Activated CD8-positive, alpha-beta T cell treated with anti-CD3 and anti-CD28 coated beads, Interleukin-2, amount 10 ng/mL, durations not matched to agents 7 days and 5 days (primary cell): ENCODE measurements at regions of chr2 and their contacts with region 1.

Region 1: DNA sequence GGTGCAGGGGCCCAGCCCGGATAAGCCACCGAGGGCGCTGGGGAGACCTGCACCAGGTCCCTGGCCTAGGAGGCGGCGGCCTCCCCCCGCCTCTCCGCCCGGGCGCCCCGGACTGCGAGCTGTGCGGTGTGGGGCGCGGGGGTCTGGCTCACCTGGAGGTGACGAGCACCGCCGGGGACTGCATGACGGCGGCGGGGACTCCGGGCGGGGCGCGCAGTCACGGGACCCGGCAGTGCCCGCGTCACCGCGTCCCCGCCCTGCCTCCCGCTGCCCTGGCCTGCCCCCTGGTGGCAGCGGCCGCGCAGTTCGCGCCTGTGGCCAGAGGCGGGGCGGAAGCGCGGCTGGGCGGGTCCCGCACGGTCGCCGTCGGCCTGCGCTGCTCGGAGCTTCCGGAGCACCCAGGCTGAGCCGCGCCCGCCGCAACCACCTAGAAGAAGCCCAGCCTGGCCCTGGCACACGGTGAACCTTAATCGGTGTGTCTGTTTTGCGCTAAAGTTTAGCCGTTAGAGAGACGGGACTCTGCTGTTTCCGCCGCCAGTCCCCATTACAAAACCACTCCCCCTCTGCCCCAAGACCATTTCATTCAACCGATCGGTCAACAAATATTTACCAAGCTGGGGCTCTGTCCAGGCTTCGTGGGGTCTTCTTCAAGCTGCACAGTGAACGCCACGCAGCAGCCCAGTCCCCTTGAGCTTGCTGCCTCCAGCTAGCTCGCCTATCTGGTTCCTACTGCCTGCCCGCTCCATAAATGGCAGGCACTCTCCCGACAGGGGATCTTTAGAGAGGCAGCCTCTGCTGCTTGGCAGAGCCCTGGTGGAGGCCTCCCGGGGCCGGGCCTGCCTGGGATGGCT is at the start of gene HS1BP3:
- DNase-seq: peak; percentile 89
- ATAC-seq: peak; percentile 95
- H3K4me3 Mint-ChIP-seq: peak within 1 kb of the TSS; percentile 87
- H3K27ac Mint-ChIP-seq: peak within 1 kb of the TSS; percentile 91
- H3K4me1 Mint-ChIP-seq: peaks cover 19% of the 10 kb centered on the region
- H3K27me3 Mint-ChIP-seq: peaks cover 7% of the 10 kb centered on the region
- total RNA-seq, gene HS1BP3: 10.5 to 11.2 TPM

Region 2: GRCh38 chr2:20350753-20351554 is 300.2 kb before region 1 on chr2 and contains the start of gene PUM2:
- CTCF ChIA-PET with region 1: interaction called, 3 read pairs
- POLR2A ChIA-PET with region 1: interaction called, 10 read pairs
- DNase-seq: peak; percentile 95
- ATAC-seq: peak; percentile 86
- H3K4me3 Mint-ChIP-seq: peak within 1 kb of the TSS; percentile 78
- H3K27ac Mint-ChIP-seq: no peak within 1 kb of the TSS
- H3K4me1 Mint-ChIP-seq: peaks cover 29% of the 10 kb centered on the region
- H3K27me3 Mint-ChIP-seq: no peaks in the 10 kb centered on the region
- total RNA-seq, gene PUM2: 123 to 129 TPM

Region 3: DNA sequence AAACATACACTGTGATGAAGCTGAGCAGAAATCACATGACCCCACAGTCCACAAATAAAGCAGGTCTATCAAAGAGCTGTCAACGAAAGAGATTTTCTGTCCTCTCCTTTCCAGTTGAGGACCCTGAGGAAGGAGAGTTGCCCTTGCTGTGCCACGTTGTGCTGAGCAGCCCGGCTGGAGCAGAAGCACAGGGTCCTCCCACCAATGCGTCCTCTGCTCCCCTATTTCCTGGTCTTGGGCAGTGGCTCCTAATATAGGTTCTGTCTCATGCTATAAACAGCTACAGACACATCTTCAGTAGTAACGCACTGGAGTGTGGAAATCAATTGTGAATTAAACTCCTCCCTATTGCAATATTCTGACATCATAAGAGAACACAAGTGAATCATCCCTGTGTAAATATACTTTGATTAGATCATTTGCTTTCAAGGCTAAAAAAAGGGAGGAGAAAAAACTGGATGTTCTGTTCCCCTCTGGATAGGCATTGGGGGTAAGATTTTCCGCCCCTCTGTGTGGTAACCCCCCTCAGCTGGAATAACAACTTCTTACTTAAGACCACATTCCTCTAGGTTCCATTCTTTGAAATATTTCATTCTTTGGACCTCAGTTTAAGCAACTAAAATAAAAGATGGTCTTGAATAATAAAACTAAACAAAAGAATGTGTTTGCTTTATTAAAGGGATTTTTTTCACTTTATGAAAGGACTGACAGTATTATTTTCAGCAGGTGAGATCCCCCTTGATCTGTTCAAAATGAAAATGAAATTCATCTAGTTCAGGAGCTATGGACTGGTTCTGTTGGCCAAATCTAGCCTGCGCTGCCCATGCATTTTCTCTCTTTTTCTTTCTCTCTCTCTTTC is 212.5 kb before region 1 on chr2:
- CTCF ChIA-PET with region 1: interaction called, 37 read pairs
- POLR2A ChIA-PET with region 1: no interaction called
- DNase-seq: no peak
- ATAC-seq: no peak
- H3K4me3 Mint-ChIP-seq: no peak overlapping the region
- H3K27ac Mint-ChIP-seq: no peak overlapping the region
- H3K4me1 Mint-ChIP-seq: no peaks in the 10 kb centered on the region
- H3K27me3 Mint-ChIP-seq: peaks cover 30% of the 10 kb centered on the region

Region 4: DNA sequence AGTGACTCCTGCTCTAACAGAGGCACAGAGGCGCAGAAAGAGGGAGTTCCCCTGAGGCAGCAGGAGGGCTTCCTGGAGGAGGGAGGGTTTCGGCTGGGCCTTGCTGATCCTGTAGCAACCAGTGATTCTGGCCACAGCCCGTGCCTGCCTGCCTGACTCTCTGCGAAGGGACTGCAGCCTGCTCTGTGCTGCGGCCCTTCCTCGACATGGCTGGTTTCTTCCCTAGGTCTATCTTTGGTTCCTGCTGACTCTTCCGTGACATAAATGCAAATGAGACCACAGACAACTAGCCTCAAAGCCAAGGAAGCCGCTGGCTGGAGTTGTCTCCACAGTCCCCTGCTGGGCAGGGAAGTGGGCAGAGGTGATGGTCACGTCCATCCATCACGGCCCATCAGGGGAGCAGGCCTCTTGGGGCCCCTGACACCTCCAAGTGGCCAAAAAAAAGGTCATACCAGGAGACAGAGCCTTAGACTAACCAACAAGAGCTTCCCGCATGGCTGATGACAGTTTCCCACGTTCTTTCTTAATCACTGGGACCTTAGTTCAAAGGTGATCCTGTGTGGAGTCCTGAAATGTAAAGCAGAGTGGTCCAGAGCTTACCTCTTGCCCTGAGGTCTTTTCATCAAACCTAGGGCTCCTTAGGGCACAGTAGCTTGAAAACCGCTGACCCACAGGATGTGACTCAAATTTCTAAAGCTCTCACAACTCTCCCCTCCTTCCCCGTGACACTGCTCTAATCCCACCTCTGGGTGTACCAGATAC is 55.5 kb before region 1 on chr2:
- CTCF ChIA-PET with region 1: interaction called, 12 read pairs
- POLR2A ChIA-PET with region 1: no interaction called
- DNase-seq: peak; percentile 45
- ATAC-seq: peak; percentile 61
- H3K4me3 Mint-ChIP-seq: no peak overlapping the region
- H3K27ac Mint-ChIP-seq: peak overlapping the region; percentile 77
- H3K4me1 Mint-ChIP-seq: peaks cover 20% of the 10 kb centered on the region
- H3K27me3 Mint-ChIP-seq: no peaks in the 10 kb centered on the region

Region 5: DNA sequence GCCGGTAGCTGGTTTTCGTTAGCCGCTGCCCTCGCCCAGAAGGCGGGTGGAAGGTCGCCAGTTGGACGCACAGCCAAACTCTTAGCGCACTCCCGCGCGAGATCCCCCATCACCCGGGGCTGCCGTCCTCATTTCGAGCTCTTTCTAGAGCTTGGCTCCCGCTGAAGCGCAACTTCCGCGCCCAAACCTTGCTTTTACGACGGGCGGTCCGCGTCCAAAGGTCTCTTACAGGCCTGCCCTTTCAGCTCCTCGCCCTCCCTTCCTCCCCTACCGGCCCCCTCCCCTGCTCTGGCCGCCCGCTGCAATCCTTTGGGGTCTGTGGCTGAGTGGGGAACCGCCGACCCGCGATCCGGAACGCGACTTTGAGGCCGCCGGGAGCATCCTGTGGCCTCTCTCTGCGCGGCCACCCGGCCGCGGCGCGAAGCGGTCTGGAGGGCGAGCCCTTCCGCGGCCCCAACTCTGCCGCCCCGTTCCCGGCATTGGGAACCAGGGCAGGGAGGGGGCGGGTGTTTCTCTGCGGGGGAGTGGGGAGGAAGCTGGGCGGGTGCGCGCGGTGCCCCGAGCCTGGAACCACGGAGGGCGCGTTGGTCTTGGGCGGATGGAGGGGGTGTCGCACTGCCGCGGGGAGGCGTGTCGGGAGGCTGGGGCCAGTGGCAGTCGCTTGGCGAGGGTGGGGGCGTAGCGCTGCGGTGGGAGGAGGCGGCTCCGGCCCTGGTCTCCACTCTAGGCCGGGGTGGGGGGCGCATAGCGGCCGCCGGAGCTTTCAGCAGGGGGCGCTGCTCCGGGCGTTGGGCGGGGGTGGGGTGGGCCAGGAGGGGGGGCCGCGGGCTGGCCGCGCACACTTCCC is 15.4 kb after region 1 on chr2 and contains the start of gene GDF7:
- CTCF ChIA-PET with region 1: interaction called, 57 read pairs
- POLR2A ChIA-PET with region 1: interaction called, 7 read pairs
- DNase-seq: peak; percentile 39
- ATAC-seq: peak; percentile 20
- H3K4me3 Mint-ChIP-seq: peak within 1 kb of the TSS; percentile 51
- H3K27ac Mint-ChIP-seq: no peak within 1 kb of the TSS
- H3K4me1 Mint-ChIP-seq: peaks cover 14% of the 10 kb centered on the region
- H3K27me3 Mint-ChIP-seq: peaks cover 68% of the 10 kb centered on the region
- total RNA-seq, gene GDF7: not detected